SK-N-SH (cell line): ENCODE measurements at regions of chr9 and their contacts with region 1.

Region 1: GRCh38 chr9:101530077-101530711 is 3.5 kb upstream of the RNF20 start:
- DNase-seq: peak; percentile 57
- H3K4me3 ChIP-seq: no peak overlapping the region; a peak in 1 of 4 replicates
- H3K27ac ChIP-seq: no peak overlapping the region
- H3K4me1 ChIP-seq: peaks cover 0 to 5% of the 10 kb centered on the region in 2 experiments; a peak in 2 of 4 replicates
- H3K27me3 ChIP-seq: no peaks in the 10 kb centered on the region
- CTCF ChIP-seq: peak; percentile 90
- EP300 ChIP-seq: no peak
- RAD21 ChIP-seq: peak; percentile 86

Region 2: DNA sequence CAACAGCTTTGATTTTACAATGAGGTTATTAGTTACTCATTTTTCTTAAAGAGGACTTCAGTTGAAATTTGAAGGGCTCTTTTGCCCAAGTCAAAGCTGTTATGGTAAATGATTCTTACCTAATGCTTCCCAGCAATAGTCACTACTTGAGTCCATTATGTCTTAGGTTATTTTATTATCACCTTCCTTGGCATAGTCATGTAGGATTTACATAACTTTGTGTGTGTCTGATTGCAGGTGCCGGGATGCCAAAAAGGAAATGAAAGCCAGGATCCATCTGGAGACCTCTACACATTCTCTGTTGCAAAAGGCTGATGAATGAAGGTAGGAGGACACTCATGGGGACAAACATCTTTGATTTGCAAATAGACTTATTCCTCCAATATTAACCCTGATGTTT is 540.5 kb before region 1 on chr9:
- CTCF ChIA-PET with region 1: no interaction called
- POLR2A ChIA-PET with region 1: no interaction called
- DNase-seq: no peak
- H3K4me3 ChIP-seq: no peak overlapping the region
- H3K27ac ChIP-seq: no peak overlapping the region
- H3K4me1 ChIP-seq: no peaks in the 10 kb centered on the region
- H3K27me3 ChIP-seq: no peaks in the 10 kb centered on the region
- CTCF ChIP-seq: no peak
- EP300 ChIP-seq: no peak
- RAD21 ChIP-seq: no peak

Region 3: GRCh38 chr9:101427957-101428655 is 102.1 kb before region 1 on chr9:
- CTCF ChIA-PET with region 1: interaction called, 10 read pairs
- POLR2A ChIA-PET with region 1: no interaction called
- DNase-seq: no peak
- H3K4me3 ChIP-seq: no peak overlapping the region
- H3K27ac ChIP-seq: no peak overlapping the region
- H3K4me1 ChIP-seq: no peaks in the 10 kb centered on the region
- H3K27me3 ChIP-seq: no peaks in the 10 kb centered on the region; the same call in 1 of the 2 replicates
- CTCF ChIP-seq: no peak
- EP300 ChIP-seq: no peak
- RAD21 ChIP-seq: no peak

Region 4: DNA sequence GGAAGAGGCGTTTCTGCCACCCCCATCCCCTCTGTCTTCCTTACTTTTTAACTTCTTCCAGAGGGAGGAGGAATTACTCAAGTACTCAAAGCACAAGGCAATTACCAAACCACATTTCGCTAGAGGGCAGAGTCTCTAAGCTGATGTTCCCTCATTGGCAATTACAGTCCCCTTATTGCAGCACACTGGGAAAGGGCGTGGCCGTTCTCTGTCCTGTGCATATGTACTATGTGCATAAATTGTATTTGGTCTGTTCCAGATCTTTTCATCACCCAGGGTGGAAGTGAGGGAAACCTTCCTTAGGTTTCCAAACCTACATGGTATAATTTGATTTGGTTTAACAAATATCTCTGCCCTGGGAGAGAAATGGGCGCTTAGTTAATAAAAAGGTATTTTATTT is 64.8 kb before region 1 on chr9:
- CTCF ChIA-PET with region 1: interaction called, 363 read pairs
- POLR2A ChIA-PET with region 1: interaction called, 6 read pairs
- DNase-seq: no peak
- H3K4me3 ChIP-seq: no peak overlapping the region
- H3K27ac ChIP-seq: no peak overlapping the region
- H3K4me1 ChIP-seq: peaks cover 0 to 3% of the 10 kb centered on the region in 2 experiments; a peak in 2 of 4 replicates
- H3K27me3 ChIP-seq: no peaks in the 10 kb centered on the region
- CTCF ChIP-seq: peak; percentile 43
- EP300 ChIP-seq: no peak
- RAD21 ChIP-seq: no peak

Region 5: GRCh38 chr9:101486693-101487442 is 43.3 kb before region 1 on chr9:
- CTCF ChIA-PET with region 1: interaction called, 22 read pairs
- POLR2A ChIA-PET with region 1: interaction called, 10 read pairs
- DNase-seq: peak; percentile 86
- H3K4me3 ChIP-seq: peak overlapping the region; percentile 66 to 73
- H3K27ac ChIP-seq: peak overlapping the region; percentile 19 to 87; a peak in 3 of 4 replicates
- H3K4me1 ChIP-seq: peaks cover 0 to 3% of the 10 kb centered on the region in 2 experiments; a peak in 2 of 4 replicates
- H3K27me3 ChIP-seq: no peaks in the 10 kb centered on the region
- CTCF ChIP-seq: peak; percentile 38
- EP300 ChIP-seq: no peak
- RAD21 ChIP-seq: peak; percentile 67

Region 6: DNA sequence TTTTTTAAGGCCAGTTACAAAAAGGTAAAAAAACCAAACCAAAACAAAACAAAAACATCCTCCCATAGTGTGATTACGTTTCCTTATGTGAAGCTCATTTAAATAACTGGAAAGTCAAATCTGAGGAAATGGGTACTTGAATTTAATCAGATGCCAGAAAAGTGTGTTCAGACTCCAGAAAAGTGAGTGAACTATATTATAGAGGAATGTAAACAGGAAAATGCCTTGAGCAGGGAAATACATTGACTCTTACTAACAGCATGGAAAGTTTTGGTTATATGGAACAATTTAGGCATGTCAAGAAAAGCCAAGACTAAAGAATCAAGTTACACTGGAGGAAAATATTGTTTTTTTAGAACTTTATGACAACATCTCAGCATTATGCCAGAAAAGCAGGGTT is 34.4 kb before region 1 on chr9:
- CTCF ChIA-PET with region 1: interaction called, 11 read pairs
- POLR2A ChIA-PET with region 1: no interaction called
- DNase-seq: no peak
- H3K4me3 ChIP-seq: no peak overlapping the region
- H3K27ac ChIP-seq: peak overlapping the region; percentile 16 to 39; a peak in 3 of 4 replicates
- H3K4me1 ChIP-seq: peaks cover 0 to 8% of the 10 kb centered on the region in 2 experiments; a peak in 2 of 4 replicates
- H3K27me3 ChIP-seq: no peaks in the 10 kb centered on the region
- CTCF ChIP-seq: no peak
- EP300 ChIP-seq: no peak
- RAD21 ChIP-seq: no peak

Region 7: DNA sequence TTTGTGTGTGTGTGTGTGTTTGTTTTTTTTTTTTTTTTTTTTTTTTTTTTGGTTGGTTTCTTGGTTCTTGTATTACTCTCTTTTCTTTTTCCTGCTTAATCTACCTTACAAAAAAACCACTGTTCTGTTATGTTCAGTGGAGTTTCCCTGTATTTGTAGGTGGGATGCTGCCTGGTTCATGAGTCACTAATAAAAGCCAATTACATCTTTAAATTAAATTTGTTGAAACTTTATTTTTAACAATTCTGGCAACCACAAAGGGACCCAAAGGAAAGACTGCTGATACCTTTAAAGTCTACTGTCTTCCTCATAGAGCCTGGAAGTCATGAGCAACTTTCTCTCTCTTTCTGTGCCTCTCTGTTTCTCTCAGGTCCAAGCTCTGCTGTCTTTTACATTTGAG is 26.0 kb before region 1 on chr9:
- CTCF ChIA-PET with region 1: interaction called, 11 read pairs
- POLR2A ChIA-PET with region 1: no interaction called
- DNase-seq: no peak
- H3K4me3 ChIP-seq: no peak overlapping the region
- H3K27ac ChIP-seq: no peak overlapping the region
- H3K4me1 ChIP-seq: peaks cover 0 to 13% of the 10 kb centered on the region in 2 experiments; a peak in 1 of 4 replicates
- H3K27me3 ChIP-seq: no peaks in the 10 kb centered on the region
- CTCF ChIP-seq: no peak
- EP300 ChIP-seq: no peak
- RAD21 ChIP-seq: no peak

Region 8: DNA sequence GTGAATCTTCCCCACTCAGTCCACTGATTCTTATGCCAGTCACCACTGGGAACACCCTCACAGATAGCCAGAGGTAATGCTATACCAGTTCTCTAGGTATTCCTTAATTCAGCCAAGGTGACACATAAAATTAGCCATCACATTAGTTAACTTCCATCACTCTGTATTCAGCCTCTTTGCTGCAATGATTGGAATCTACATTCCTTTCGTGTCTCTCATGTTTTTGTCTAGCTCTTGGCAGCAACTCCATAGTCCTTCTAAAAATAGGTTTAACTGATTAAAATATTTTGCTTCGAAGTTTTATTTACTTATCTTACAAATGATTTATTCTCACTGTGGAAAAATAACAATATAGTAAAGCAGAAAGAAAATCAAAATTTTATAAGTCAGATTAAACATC is 16.1 kb before region 1 on chr9:
- CTCF ChIA-PET with region 1: interaction called, 21 read pairs
- POLR2A ChIA-PET with region 1: no interaction called
- DNase-seq: no peak
- H3K4me3 ChIP-seq: no peak overlapping the region
- H3K27ac ChIP-seq: no peak overlapping the region; a peak in 1 of 4 replicates
- H3K4me1 ChIP-seq: peaks cover 0 to 21% of the 10 kb centered on the region in 2 experiments; a peak in 2 of 4 replicates
- H3K27me3 ChIP-seq: no peaks in the 10 kb centered on the region
- CTCF ChIP-seq: no peak
- EP300 ChIP-seq: peak in 1 of 2 experiments; percentile 88; a peak in 2 of 4 replicates
- RAD21 ChIP-seq: no peak

Region 9: GRCh38 chr9:101639785-101640665 is 109.8 kb after region 1 on chr9:
- CTCF ChIA-PET with region 1: no interaction called
- POLR2A ChIA-PET with region 1: no interaction called
- DNase-seq: no peak
- H3K4me3 ChIP-seq: no peak overlapping the region
- H3K27ac ChIP-seq: no peak overlapping the region
- H3K4me1 ChIP-seq: no peaks in the 10 kb centered on the region
- H3K27me3 ChIP-seq: no peaks in the 10 kb centered on the region
- CTCF ChIP-seq: no peak
- EP300 ChIP-seq: no peak
- RAD21 ChIP-seq: no peak

Region 10: GRCh38 chr9:101897196-101897595 is 367.0 kb after region 1 on chr9:
- CTCF ChIA-PET with region 1: no interaction called
- POLR2A ChIA-PET with region 1: no interaction called
- DNase-seq: no peak
- H3K4me3 ChIP-seq: no peak overlapping the region
- H3K27ac ChIP-seq: no peak overlapping the region
- H3K4me1 ChIP-seq: no peaks in the 10 kb centered on the region
- H3K27me3 ChIP-seq: no peaks in the 10 kb centered on the region
- CTCF ChIP-seq: no peak
- EP300 ChIP-seq: no peak
- RAD21 ChIP-seq: no peak